Right lobe of liver (tissue), 6 donors: ENCODE measurements at regions of chr15 and their contacts with region 1.

Region 1: DNA sequence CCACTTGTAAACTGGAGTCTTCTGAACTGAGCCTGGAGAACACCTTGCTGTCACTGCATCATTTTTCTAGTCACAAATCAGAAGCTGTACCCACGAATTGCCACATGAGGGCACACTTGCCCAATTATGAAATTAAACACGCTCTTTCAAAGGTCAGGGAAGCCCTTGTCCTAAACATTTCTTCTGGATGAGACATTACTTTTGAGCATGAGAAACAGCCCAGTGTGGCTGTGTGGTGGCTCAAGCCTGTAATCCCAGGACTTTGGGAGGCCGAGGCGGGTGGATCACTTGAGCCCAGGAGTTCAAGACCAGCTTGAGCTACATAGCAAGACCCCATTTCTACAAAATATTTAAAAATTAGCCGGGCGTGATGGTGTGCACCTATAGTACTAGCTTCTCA is 27.5 kb upstream of the CFAP161 start:
- DNase-seq: peak in 1 of 3 donors; percentile 54
- ATAC-seq: peak; percentile 80 to 90 (median 87)
- H3K4me3 ChIP-seq: no peak overlapping the region
- H3K27ac ChIP-seq: no peak overlapping the region
- H3K4me1 ChIP-seq: peaks cover 0 to 12% (median 4%) of the 10 kb centered on the region in 4 donors
- H3K27me3 ChIP-seq: no peaks in the 10 kb centered on the region
- CTCF ChIP-seq: peak; percentile 71 to 78 (median 78)
- POLR2A ChIP-seq: no peak

Region 2: GRCh38 chr15:80989518-80990478 is 116.8 kb before region 1 on chr15 and contains the start of gene MESD:
- intact Hi-C with region 1: loop called in 1 of 2 experiments (anchors 10 kb)
- DNase-seq: peak; percentile 99
- ATAC-seq: peak; percentile 96 to 99 (median 98)
- H3K4me3 ChIP-seq: peak within 1 kb of the TSS; percentile 78 to 88 (median 82)
- H3K27ac ChIP-seq: peak within 1 kb of the TSS; percentile 82 to 89 (median 83)
- H3K4me1 ChIP-seq: peaks cover 0 to 15% (median 6%) of the 10 kb centered on the region in 4 donors
- H3K27me3 ChIP-seq: no peaks in the 10 kb centered on the region
- CTCF ChIP-seq: no peak
- POLR2A ChIP-seq: peak; percentile 89
- total RNA-seq, gene MESD: 10.8 to 16.7 (median 14.6) TPM

Region 3: GRCh38 chr15:80996247-80996646 is 110.3 kb before region 1 on chr15:
- intact Hi-C with region 1: loop called (anchors 5 to 10 kb)
- DNase-seq: no peak
- ATAC-seq: peak in 3 of 4 donors; percentile 8 to 43 (median 33)
- H3K4me3 ChIP-seq: no peak overlapping the region
- H3K27ac ChIP-seq: no peak overlapping the region
- H3K4me1 ChIP-seq: peaks cover 0 to 7% (median 0%) of the 10 kb centered on the region in 4 donors
- H3K27me3 ChIP-seq: no peaks in the 10 kb centered on the region
- CTCF ChIP-seq: peak; percentile 49 to 72 (median 66)
- POLR2A ChIP-seq: no peak

Region 4: GRCh38 chr15:81023483-81024264 is 82.9 kb before region 1 on chr15:
- intact Hi-C with region 1: no loop called
- DNase-seq: peak; percentile 77 to 84 (median 79)
- ATAC-seq: peak; percentile 90 to 93 (median 92)
- H3K4me3 ChIP-seq: no peak overlapping the region
- H3K27ac ChIP-seq: peak overlapping the region; percentile 37 to 61 (median 49)
- H3K4me1 ChIP-seq: peaks cover 0 to 8% (median 2%) of the 10 kb centered on the region in 4 donors
- H3K27me3 ChIP-seq: no peaks in the 10 kb centered on the region
- CTCF ChIP-seq: no peak
- POLR2A ChIP-seq: no peak

Region 5: DNA sequence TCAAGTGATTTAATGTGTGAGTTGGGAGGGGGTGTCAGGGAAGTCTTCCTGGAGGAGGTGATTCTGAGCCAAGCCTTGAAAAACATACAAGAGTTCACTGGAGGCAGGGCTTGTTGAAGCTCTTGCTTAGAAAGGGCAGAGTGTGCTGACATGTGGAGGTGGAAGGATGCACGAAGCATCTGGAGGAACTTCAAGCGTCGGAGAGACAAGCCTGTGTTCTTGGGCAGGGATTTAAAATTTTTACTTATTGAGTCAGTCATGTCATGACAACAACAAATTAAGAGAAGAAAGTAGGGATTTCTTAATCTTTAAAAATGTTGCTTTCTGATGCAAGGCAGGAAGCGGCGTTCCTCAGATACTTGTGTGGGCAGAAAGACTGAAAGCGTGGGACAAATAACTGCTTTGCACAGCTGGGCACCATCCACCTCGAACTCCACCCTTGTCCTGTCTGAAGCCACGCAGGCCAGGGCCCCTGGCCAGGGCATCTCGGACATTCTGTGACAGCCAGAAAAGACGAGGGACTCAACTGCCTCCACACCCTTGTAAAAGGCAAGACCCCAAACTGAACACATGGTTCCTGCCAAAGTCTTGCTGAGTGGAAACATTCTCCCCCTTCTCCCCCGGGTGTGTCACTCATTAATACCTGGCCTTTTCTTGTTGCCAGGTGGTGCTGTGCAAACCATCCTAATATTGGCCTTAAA is 83.2 kb after region 1 on chr15:
- intact Hi-C with region 1: no loop called
- DNase-seq: no peak
- ATAC-seq: no peak
- H3K4me3 ChIP-seq: no peak overlapping the region
- H3K27ac ChIP-seq: no peak overlapping the region
- H3K4me1 ChIP-seq: no peaks in the 10 kb centered on the region
- H3K27me3 ChIP-seq: no peaks in the 10 kb centered on the region
- CTCF ChIP-seq: no peak
- POLR2A ChIP-seq: no peak